ENCODE measurements at regions of chr1 and their contacts with region 1.

Region 1: DNA sequence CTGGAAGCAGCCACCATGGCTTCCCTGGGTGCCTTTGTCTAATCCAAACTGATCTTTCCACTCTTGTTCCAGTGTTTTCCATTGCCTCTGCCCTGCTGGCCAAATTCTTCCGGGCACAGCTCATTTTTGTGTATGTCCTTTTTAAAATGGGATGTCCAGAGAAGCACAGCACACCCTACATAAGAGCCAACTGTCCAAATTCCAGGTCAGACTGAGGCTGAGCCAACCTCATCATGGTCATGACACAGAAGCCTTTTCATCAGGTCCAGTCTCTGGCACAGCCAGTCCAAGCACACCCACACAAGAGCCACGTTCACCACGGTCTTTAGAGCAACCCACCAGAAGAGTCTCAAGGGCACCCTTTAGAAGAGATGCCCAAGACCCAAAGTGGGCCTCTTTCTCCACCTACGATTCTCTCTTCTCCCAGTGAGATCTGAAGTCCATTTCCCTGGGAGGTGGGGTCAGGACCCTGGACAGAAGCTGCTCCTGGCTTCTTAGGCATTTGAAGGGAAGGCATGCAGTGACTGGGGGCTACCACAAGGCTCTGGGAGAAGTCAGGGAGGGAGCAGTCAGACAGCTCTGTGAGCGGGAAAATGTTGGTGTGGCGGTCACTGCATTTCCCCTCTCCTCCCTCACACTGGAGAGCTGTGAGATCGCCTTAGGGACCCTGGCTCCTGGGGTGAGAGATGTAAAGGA is 53.2 kb downstream of the SYT2 start:
- DNase-seq: peak in 2 of 3 donors; percentile 21 to 30
- H3K4me3 ChIP-seq: no peak overlapping the region
- H3K27ac ChIP-seq: no peak overlapping the region
- H3K4me1 ChIP-seq: no peaks in the 10 kb centered on the region
- H3K27me3 ChIP-seq: peaks cover 0 to 77% (median 31%) of the 10 kb centered on the region in 5 experiments

Region 2: DNA sequence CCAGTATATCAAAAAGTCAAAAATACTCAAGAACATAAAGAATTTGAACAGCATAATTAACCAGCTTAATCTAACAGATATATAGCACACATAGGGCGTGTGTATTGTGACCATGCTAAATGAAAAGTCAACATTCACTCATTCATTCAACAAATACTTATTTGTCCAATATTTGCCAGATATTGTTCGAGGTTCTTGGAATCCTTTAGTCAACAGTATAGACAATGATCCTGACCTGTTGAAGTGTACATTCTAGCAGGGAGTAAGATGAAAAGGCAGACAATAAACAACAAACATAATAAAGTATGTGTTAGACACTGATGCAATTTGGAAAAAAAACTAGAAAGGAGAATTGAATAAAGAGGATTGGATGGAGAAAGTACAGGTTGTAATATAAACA is 134.1 kb before region 1 on chr1:
- CTCF ChIA-PET with region 1: no interaction called
- POLR2A ChIA-PET with region 1: no interaction called
- DNase-seq: no peak
- H3K4me3 ChIP-seq: no peak overlapping the region
- H3K27ac ChIP-seq: no peak overlapping the region
- H3K4me1 ChIP-seq: no peaks in the 10 kb centered on the region
- H3K27me3 ChIP-seq: no peaks in the 10 kb centered on the region

Region 3: GRCh38 chr1:202671122-202671797 is 14.2 kb after region 1 on chr1:
- CTCF ChIA-PET with region 1: interaction called, 32 read pairs
- POLR2A ChIA-PET with region 1: no interaction called
- DNase-seq: no peak
- H3K4me3 ChIP-seq: no peak overlapping the region
- H3K27ac ChIP-seq: no peak overlapping the region
- H3K4me1 ChIP-seq: no peaks in the 10 kb centered on the region
- H3K27me3 ChIP-seq: peaks cover 0 to 9% (median 0%) of the 10 kb centered on the region in 5 experiments

Region 4: DNA sequence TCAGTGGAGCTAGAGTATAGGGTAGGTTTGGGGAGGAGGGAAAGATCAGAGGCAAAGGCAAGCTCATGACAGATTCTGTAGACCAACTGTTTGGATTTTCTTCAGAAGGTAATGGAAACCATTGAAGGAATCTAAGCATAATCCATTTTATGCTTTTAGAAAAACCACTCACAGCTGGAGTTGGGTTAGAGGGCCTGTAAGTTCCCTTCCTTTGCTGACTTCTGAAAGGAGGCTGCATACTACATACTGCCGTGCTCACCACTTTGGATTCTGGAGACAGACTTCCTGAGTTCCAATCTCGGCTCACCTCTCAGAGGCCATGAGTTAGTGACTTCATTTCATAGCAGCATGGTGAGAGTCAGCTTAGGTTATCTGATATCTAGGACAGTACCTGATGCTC is 59.6 kb after region 1 on chr1:
- CTCF ChIA-PET with region 1: interaction called, 28 read pairs
- POLR2A ChIA-PET with region 1: interaction called, 3 read pairs
- DNase-seq: no peak
- H3K4me3 ChIP-seq: no peak overlapping the region
- H3K27ac ChIP-seq: no peak overlapping the region
- H3K4me1 ChIP-seq: no peaks in the 10 kb centered on the region
- H3K27me3 ChIP-seq: peaks cover 5 to 31% (median 26%) of the 10 kb centered on the region in 5 experiments

Measured in common myeloid progenitor, CD34-positive (primary cell).